A549 (cell line): ENCODE measurements at regions of chr11 and their contacts with region 1.

Region 1: GRCh38 chr11:65418711-65419459 is 3.7 kb upstream of the NEAT1 start:
- DNase-seq: peak; percentile 94 to 98
- ATAC-seq: peak; percentile 12 to 52
- H3K4me3 ChIP-seq: peak overlapping the region; percentile 30
- H3K27ac ChIP-seq: peak overlapping the region; percentile 97 to 100
- H3K4me1 ChIP-seq: peaks cover 52% of the 10 kb centered on the region
- CTCF ChIP-seq: no peak
- EP300 ChIP-seq: peak; percentile 76 to 83; a peak in 4 of 5 replicates
- POLR2A ChIP-seq: no peak; the same call in 1 of the 2 replicates
- RAD21 ChIP-seq: no peak

Region 2: DNA sequence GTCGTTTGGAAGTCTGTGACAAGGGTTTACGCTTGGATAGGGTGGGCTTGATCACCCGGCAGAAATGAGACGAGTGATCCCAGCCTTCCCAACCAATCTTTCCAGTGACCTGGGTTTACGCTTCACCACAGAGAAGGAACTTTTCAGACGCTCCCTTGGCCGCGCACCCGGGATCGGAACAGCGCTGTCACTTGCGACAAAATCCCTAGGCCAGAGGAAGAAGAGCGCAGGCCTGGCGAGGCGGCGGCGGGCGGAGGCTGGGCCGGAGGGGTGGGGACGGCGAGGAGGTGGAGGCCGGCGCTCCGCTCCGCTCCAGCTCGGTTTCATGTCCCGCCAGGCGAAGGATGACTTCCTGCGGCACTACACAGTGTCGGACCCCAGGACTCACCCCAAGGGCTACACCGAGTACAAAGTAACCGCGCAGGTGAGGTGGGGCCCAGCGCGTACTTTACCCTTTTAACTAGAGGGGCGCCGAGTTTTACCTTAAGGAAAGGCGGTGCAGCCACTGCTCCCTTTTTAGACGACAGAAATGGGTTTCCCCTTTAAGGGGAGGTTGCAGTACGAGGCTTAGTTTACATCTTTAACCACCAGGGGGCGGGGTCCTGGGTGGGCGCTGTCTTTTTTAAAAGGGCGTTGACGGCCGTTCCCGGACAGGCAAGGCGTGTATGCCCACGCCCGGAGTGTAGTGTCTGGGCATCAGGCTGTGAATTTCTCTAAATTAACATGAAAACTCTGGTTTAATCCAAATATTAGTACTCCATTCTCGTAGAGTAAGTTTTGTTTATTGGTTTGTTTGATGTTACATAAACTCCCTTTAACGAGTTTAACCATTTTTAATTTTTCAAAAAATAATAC is 391.4 kb before region 1 on chr11 and contains the start of gene SNX15:
- CTCF ChIA-PET with region 1: no interaction called
- POLR2A ChIA-PET with region 1: no interaction called
- DNase-seq: peak; percentile 92 to 97
- ATAC-seq: peak; percentile 95 to 97
- H3K4me3 ChIP-seq: peak within 1 kb of the TSS; percentile 52
- H3K27ac ChIP-seq: peak within 1 kb of the TSS; percentile 89 to 94
- H3K4me1 ChIP-seq: peaks cover 9% of the 10 kb centered on the region
- CTCF ChIP-seq: peak; percentile 52
- EP300 ChIP-seq: no peak
- POLR2A ChIP-seq: peak; percentile 80
- RAD21 ChIP-seq: peak; percentile 26 to 44; a peak in 3 of 5 replicates
- polyA plus RNA-seq, gene SNX15: 13.4 and 15.8 TPM in 2 replicates

Region 3: DNA sequence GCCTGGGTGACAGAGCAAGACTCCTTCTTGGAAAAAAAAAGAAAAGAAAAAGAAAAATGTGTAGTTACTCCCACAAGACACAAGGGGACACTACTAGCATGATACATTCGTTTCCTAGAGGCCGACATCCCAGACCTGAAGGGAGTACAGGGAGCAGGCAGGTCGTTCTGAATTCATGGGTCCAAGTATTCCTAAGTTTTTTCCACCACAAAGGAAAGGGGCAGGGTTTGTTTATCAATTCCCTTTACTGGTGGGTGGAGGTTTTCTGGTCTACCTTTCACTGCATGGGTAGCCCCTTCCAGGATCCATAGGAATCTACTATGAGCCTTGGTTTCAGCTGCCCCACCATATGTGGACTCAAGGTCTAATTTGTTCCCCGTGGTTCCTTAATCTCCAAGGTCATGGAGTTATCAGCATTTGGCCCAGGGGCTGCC is 52.5 kb before region 1 on chr11:
- CTCF ChIA-PET with region 1: interaction called, 13 read pairs
- POLR2A ChIA-PET with region 1: interaction called, 14 read pairs
- DNase-seq: peak; percentile 88 to 90
- ATAC-seq: peak; percentile 84 to 85
- H3K4me3 ChIP-seq: no peak overlapping the region
- H3K27ac ChIP-seq: peak overlapping the region; percentile 45 to 72; a peak in 5 of 6 replicates
- H3K4me1 ChIP-seq: peaks cover 18% of the 10 kb centered on the region
- CTCF ChIP-seq: peak; percentile 85
- EP300 ChIP-seq: no peak
- POLR2A ChIP-seq: no peak
- RAD21 ChIP-seq: peak; percentile 91 to 96

Region 4: GRCh38 chr11:65398362-65398910 is 20.4 kb before region 1 on chr11:
- CTCF ChIA-PET with region 1: interaction called, 84 read pairs
- POLR2A ChIA-PET with region 1: interaction called, 7 read pairs
- DNase-seq: no peak
- ATAC-seq: no peak
- H3K4me3 ChIP-seq: no peak overlapping the region
- H3K27ac ChIP-seq: no peak overlapping the region
- H3K4me1 ChIP-seq: 0 out of 3 replicates have a peak, but pooled peaks cover 4% of the 10 kb centered on the region
- CTCF ChIP-seq: no peak
- EP300 ChIP-seq: no peak
- POLR2A ChIP-seq: no peak
- RAD21 ChIP-seq: no peak

Region 5: DNA sequence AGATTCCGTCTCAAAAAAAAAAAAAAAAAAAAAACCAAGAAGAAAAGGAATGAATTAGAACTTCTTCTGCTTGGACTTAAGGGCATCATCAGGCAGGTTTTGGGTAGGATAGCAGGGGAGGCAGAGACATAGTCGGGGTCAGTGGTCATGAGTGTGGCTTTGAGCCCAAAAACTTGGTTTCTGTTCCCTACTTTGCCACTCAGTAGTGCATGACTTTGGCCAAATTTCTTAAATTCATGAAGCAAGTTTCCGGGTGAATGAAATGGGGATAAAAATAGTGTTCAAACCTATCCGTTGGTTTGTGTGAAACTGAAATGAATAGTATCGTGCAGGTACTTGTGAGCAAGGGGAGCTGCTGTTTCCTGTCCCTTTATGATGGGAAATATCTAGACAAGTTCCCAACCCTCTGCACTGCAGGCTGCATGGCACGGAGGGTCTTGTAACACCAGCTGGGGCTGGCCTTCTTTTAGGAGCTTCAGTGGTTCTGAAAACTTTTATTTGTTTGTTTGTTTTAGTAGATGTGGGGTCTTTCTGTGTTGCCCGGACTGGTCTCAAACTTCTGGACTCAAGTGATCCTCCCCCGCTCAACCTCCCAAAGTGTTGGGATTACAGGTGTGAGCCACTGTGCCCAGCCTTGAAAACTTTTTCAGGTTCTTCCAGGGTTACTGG is 22.1 kb after region 1 on chr11:
- CTCF ChIA-PET with region 1: interaction called, 18 read pairs
- POLR2A ChIA-PET with region 1: interaction called, 18 read pairs
- DNase-seq: peak in 1 of 2 experiments; percentile 38
- ATAC-seq: no peak
- H3K4me3 ChIP-seq: no peak overlapping the region
- H3K27ac ChIP-seq: peak overlapping the region; percentile 23 to 65; a peak in 3 of 6 replicates
- H3K4me1 ChIP-seq: peaks cover 94% of the 10 kb centered on the region
- CTCF ChIP-seq: no peak
- EP300 ChIP-seq: no peak
- POLR2A ChIP-seq: no peak
- RAD21 ChIP-seq: no peak

Region 6: DNA sequence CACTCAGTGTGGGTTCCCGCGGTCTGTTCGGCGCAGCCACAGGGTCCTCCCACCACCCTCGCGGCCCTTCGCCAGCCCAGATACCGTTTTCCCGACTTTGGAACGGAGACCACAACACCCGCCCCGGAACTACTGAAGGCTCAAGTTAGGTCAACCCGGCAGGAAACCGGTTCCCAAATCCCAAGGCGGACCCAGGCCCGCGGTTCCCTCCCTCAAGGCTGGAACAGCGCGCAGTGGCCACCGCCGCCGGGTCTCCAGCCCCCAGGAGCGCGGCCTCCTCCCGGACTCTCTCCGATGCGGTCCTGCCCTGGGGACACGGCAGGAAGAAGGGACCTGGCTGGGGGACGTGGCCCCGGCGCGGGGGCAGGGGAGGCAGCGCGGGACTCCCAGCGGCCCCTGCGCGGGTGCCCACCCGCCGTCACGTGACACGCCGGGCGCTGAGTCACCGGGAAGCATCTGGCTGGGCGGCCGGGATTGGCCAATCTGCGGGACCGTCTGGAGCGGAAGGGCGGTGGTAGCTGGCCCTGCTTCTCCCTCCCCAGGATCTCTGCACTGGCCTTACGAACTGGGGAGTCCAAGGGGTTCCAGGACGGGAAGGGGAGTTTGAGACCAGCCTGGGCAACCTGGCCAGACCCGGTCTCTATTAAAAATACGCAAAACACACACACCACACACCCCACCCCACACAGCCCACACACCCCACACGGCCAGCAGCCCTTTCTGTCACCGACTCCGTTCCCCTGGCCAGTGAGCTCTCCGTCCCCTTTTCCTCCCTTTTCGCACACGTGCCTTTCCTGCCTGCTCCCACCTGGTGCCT is 58.5 kb after region 1 on chr11:
- CTCF ChIA-PET with region 1: interaction called, 13 read pairs
- POLR2A ChIA-PET with region 1: interaction called, 44 read pairs
- DNase-seq: peak; percentile 94 to 95
- ATAC-seq: peak; percentile 82 to 84
- H3K4me3 ChIP-seq: peak overlapping the region; percentile 54
- H3K27ac ChIP-seq: peak overlapping the region; percentile 93 to 99
- H3K4me1 ChIP-seq: peaks cover 79% of the 10 kb centered on the region
- CTCF ChIP-seq: no peak
- EP300 ChIP-seq: peak in 1 of 2 experiments; percentile 24; a peak in 1 of 5 replicates
- POLR2A ChIP-seq: peak; percentile 36
- RAD21 ChIP-seq: peak; percentile 0 to 28; a peak in 2 of 5 replicates

Region 7: DNA sequence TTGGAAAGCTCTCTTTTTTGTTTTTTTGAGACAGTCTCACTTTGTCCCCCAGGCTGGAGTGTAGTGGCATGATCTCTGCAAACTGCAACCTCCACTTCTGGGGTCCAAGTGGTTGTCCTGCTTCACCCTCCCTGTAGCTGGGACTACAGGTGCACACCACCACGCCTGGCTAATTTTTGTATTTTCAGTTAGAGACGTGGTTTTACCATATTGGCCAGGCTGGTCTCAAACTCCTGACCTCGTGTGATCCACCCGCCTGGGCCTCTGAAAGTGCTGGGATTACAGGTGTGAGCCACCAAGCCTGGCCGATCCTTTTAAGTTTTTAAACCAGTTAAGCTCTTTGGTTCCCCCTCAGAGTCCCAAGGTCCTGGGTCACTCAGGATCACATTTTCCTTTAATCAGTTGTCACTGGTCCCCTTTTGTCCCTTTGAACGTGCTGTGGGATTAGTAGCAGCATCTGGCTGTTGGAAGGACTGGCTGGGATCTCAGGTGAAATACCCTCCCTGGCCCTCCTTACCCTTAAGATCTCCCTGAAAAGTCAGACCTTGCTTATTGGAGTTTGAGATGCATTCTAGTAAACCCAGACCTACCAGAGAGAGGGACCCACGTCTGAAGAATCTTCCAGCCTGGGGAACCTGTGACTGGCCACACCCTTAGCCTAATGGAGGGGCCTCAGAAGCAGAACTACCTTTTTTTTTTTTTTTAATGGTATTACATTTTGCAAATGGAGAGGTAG is 88.1 kb after region 1 on chr11:
- CTCF ChIA-PET with region 1: interaction called, 159 read pairs
- POLR2A ChIA-PET with region 1: interaction called, 756 read pairs
- DNase-seq: no peak
- ATAC-seq: peak; percentile 45 to 70
- H3K4me3 ChIP-seq: peak overlapping the region; percentile 90
- H3K27ac ChIP-seq: peak overlapping the region; percentile 89 to 100
- H3K4me1 ChIP-seq: peaks cover 22% of the 10 kb centered on the region
- CTCF ChIP-seq: no peak
- EP300 ChIP-seq: no peak
- POLR2A ChIP-seq: peak; percentile 20; the same call in 1 of the 2 replicates
- RAD21 ChIP-seq: no peak